Activated CD4-positive, alpha-beta T cell treated with anti-CD3 and anti-CD28 coated beads, Interleukin-2, amount 10 ng/mL, durations not matched to agents 24 days and 14 days (primary cell): ENCODE measurements at regions of chr19 and their contacts with region 1.

Region 1: DNA sequence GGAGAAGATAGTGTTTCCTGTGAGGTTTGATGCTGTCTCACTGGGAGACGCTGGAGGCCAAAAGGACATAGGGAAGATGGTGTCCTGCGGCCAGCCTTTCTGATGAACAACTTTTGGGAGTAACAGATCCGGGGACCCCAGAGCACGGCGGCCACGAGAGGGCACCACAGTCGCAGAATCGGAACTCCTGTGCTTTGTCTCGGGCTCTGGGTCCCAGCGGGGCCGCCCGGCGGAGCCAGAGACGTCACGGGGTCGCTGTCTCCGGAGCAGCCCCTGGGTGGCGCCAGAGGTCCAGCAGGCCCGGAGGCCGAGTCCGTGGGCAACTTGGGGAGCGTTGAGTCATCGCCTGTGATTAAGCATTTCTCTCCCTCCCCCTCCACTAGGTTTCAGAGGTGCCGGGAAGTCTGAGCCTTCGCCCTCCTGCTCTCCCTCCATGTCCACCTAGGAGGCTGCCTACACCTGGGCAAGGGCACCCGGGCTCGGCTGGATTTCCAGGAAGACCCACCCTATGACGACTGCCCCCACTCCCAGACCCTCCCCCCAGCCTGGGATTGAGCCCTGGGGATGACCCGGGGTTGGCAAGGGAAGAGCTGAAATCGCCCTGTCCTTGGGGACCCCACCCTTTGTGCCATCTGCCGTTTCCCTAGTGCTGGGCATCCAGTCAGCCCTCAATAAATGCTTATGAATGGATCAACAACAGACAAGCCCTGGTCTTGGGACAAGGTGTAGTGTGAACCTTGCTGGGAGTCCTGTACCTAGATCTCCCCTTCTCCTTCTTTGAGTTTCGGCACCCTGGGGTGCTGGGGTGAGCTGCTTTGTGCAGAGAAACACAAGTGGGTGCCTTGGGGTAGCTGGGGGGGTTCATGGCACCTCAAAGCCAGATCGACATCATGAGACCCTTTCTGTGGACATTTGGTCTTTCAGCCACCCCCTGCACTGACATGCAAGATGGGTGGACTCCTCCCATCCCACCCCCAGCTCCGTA is 3.4 kb downstream of the NANOS3 start:
- DNase-seq: peak; percentile 100
- H3K4me3 Mint-ChIP-seq: peak overlapping the region; percentile 70
- H3K27ac Mint-ChIP-seq: peak overlapping the region; percentile 89
- H3K4me1 Mint-ChIP-seq: peaks cover 34% of the 10 kb centered on the region
- H3K27me3 Mint-ChIP-seq: no peaks in the 10 kb centered on the region

Region 2: GRCh38 chr19:13861732-13862531 is 18.4 kb before region 1 on chr19:
- intact Hi-C with region 1: no loop called
- DNase-seq: peak; percentile 97
- H3K4me3 Mint-ChIP-seq: peak overlapping the region; percentile 98
- H3K27ac Mint-ChIP-seq: peak overlapping the region; percentile 98
- H3K4me1 Mint-ChIP-seq: peaks cover 41% of the 10 kb centered on the region
- H3K27me3 Mint-ChIP-seq: peaks cover 24% of the 10 kb centered on the region

Region 3: DNA sequence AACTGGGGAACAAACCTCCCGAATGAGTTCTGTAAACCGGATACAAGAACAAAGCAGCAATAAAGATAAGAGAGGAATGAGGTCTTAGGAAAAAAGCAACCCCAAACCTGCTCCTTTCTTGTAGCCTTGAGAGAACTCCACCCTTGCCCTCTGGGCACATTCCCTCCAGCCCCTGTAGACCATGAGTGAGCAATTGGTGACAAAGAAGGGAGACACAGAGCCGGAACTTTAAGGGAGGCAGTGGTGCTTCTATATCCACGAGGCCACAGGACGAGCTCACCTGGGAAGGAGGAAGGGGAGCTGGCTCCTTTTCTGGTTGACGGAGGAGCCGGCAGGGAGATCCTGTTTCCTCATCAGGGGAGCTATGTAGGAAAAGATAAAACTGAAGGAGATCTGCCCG is 12.5 kb after region 1 on chr19:
- intact Hi-C with region 1: no loop called
- DNase-seq: no peak
- H3K4me3 Mint-ChIP-seq: no peak overlapping the region
- H3K27ac Mint-ChIP-seq: no peak overlapping the region
- H3K4me1 Mint-ChIP-seq: no peaks in the 10 kb centered on the region
- H3K27me3 Mint-ChIP-seq: no peaks in the 10 kb centered on the region

Region 4: GRCh38 chr19:13905938-13906904 is 25.9 kb after region 1 on chr19 and contains the starts of genes BRME1 and CC2D1A:
- intact Hi-C with region 1: loop called (anchors 2 kb)
- DNase-seq: peak; percentile 99
- H3K4me3 Mint-ChIP-seq: peak within 1 kb of the TSS; percentile 84
- H3K27ac Mint-ChIP-seq: peak within 1 kb of the TSS; percentile 94
- H3K4me1 Mint-ChIP-seq: peaks cover 15% of the 10 kb centered on the region
- H3K27me3 Mint-ChIP-seq: no peaks in the 10 kb centered on the region
- total RNA-seq, gene BRME1: 16.2 and 18.6 TPM in 2 replicates
- total RNA-seq, gene CC2D1A: 38.5 and 39.4 TPM in 2 replicates

Region 5: DNA sequence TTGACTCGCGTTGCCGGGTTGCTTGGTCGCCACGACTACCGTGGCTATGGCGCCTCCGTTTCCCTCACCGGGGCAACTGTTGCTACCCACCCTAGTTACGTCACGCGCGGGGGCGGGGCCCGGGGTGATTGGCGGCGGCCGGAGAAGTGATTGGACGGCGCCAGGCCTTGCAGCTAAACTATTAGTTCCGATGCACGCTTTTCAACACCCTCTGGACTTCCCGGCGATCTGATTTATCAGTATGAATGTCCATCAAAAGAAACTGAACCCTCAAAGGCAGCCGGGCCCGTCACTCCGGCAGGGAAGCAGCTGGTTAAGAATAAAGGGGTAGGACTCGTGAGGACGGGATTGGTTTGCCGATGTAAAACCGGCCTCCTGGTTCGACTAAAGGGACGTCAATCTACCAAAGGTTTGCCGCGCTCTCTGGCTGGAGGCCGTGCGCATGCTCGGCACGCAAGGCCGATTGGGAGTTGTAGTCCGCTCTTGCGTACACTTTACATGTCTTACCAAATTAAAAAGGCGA is 126.0 kb after region 1 on chr19 and contains the start of gene RFX1:
- intact Hi-C with region 1: loop called (anchors 1 kb)
- DNase-seq: peak; percentile 100
- H3K4me3 Mint-ChIP-seq: peak within 1 kb of the TSS; percentile 96
- H3K27ac Mint-ChIP-seq: peak within 1 kb of the TSS; percentile 100
- H3K4me1 Mint-ChIP-seq: peaks cover 39% of the 10 kb centered on the region
- H3K27me3 Mint-ChIP-seq: no peaks in the 10 kb centered on the region
- total RNA-seq, gene RFX1: 17.0 and 18.0 TPM in 2 replicates

Region 6: GRCh38 chr19:14059093-14059480 is 178.7 kb after region 1 on chr19:
- intact Hi-C with region 1: loop called (anchors 5 kb)
- DNase-seq: peak; percentile 87
- H3K4me3 Mint-ChIP-seq: peak overlapping the region; percentile 80
- H3K27ac Mint-ChIP-seq: no peak overlapping the region
- H3K4me1 Mint-ChIP-seq: peaks cover 27% of the 10 kb centered on the region
- H3K27me3 Mint-ChIP-seq: peaks cover 40% of the 10 kb centered on the region

Region 7: GRCh38 chr19:14117668-14118164 is 237.4 kb after region 1 on chr19 and contains the start of gene PRKACA:
- intact Hi-C with region 1: loop called (anchors 1 kb)
- DNase-seq: peak; percentile 100
- H3K4me3 Mint-ChIP-seq: peak within 1 kb of the TSS; percentile 98
- H3K27ac Mint-ChIP-seq: peak within 1 kb of the TSS; percentile 94
- H3K4me1 Mint-ChIP-seq: peaks cover 34% of the 10 kb centered on the region
- H3K27me3 Mint-ChIP-seq: no peaks in the 10 kb centered on the region
- total RNA-seq, gene PRKACA: 62.6 and 64.7 TPM in 2 replicates